ENCODE measurements at regions of chr1 and their contacts with region 1.

Region 1: GRCh38 chr1:21324368-21325141 is 34.3 kb upstream of the ECE1 start:
- DNase-seq: peak; percentile 75 to 77
- ATAC-seq: peak; percentile 78 to 79
- H3K4me3 ChIP-seq: 0 out of 3 replicates have a peak overlapping the region, but pooled peaks have one; percentile 12
- H3K27ac ChIP-seq: peak overlapping the region; percentile 94 to 98
- H3K4me1 ChIP-seq: peaks cover 88% of the 10 kb centered on the region
- CTCF ChIP-seq: no peak
- EP300 ChIP-seq: no peak; a peak in 2 of 5 replicates
- POLR2A ChIP-seq: no peak
- RAD21 ChIP-seq: peak in 1 of 2 experiments; percentile 22; a peak in 1 of 5 replicates

Region 2: DNA sequence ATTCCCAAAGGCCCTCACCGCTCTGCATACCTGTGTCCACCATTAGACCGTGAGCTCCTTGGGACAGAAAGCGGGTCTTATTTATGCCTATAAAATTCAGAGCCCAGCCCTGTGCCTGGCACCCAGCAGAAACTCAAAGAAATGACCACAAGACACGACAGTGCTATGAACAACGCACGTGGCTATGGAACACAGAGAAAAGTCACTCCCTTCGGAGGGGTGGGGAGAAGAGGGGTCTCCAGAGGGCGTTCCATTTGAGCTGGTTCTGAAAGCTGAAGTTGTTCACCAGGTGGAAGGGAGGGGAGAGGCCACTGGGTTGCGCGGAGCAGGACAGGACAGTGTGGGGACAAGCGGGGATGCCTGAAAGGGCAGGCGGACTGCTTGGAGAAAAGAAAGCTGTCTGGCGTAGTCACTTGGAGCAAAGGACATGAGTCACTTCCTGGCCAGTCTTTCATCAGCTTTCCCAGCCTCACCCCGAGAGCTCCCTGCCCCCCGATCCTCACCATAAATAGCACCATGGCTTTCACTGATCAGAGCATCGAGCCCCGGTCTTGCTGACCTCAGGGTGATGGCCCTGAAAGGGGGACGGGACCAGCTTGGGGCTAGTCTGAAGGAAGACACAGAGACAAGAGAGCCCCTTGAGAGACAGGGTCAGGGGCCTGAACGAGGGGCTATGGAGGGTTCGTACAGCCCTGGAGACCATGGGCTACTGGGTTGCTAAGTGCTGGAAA is 62.8 kb before region 1 on chr1:
- CTCF ChIA-PET with region 1: interaction called, 7 read pairs
- POLR2A ChIA-PET with region 1: interaction called, 11 read pairs
- DNase-seq: peak; percentile 81 to 94
- ATAC-seq: peak; percentile 72 to 79
- H3K4me3 ChIP-seq: no peak overlapping the region
- H3K27ac ChIP-seq: peak overlapping the region; percentile 95
- H3K4me1 ChIP-seq: peaks cover 69% of the 10 kb centered on the region
- CTCF ChIP-seq: no peak
- EP300 ChIP-seq: peak; percentile 61 to 78; a peak in 3 of 5 replicates
- POLR2A ChIP-seq: no peak
- RAD21 ChIP-seq: no peak; a peak in 2 of 5 replicates

Region 3: GRCh38 chr1:21313203-21313885 is 11.2 kb before region 1 on chr1:
- CTCF ChIA-PET with region 1: interaction called, 15 read pairs
- POLR2A ChIA-PET with region 1: no interaction called
- DNase-seq: no peak
- ATAC-seq: no peak
- H3K4me3 ChIP-seq: no peak overlapping the region
- H3K27ac ChIP-seq: peak overlapping the region in 1 of 2 experiments; percentile 29; a peak in 2 of 6 replicates
- H3K4me1 ChIP-seq: peaks cover 51% of the 10 kb centered on the region
- CTCF ChIP-seq: no peak
- EP300 ChIP-seq: no peak
- POLR2A ChIP-seq: no peak
- RAD21 ChIP-seq: no peak

Region 4: GRCh38 chr1:21355956-21356355 is 31.4 kb after region 1 on chr1:
- CTCF ChIA-PET with region 1: no interaction called
- POLR2A ChIA-PET with region 1: no interaction called
- DNase-seq: no peak
- ATAC-seq: peak in 1 of 2 experiments; percentile 71; a peak in 2 of 6 replicates
- H3K4me3 ChIP-seq: no peak overlapping the region
- H3K27ac ChIP-seq: no peak overlapping the region
- H3K4me1 ChIP-seq: no peaks in the 10 kb centered on the region
- CTCF ChIP-seq: no peak
- EP300 ChIP-seq: no peak
- POLR2A ChIP-seq: no peak
- RAD21 ChIP-seq: no peak

Region 5: DNA sequence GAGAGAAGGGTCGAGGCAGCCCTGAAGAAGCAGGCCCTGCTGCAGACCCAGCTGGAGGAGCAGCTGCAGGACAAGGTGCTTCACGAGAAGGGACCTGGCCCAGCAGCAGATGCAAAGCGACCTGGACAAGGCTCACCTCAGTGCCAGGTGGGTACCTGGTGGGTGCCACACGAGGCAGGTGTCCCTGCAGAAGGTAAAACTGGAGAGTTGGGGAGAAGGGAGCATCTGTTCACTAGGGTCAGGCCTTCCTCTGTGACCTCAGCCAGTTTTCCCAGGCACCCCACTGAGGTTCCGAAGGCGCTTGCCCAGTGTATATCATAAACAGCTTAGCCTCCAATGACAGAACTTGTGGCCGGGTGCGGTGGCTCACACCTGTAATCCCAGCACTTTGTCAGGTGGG is 109.8 kb after region 1 on chr1:
- CTCF ChIA-PET with region 1: no interaction called
- POLR2A ChIA-PET with region 1: no interaction called
- DNase-seq: no peak
- ATAC-seq: no peak
- H3K4me3 ChIP-seq: no peak overlapping the region
- H3K27ac ChIP-seq: no peak overlapping the region
- H3K4me1 ChIP-seq: peaks cover 3% of the 10 kb centered on the region; the same call in 1 of the 3 replicates
- CTCF ChIP-seq: no peak
- EP300 ChIP-seq: no peak
- POLR2A ChIP-seq: no peak
- RAD21 ChIP-seq: no peak

Region 6: GRCh38 chr1:21552715-21553114 is 228.2 kb after region 1 on chr1:
- CTCF ChIA-PET with region 1: no interaction called
- POLR2A ChIA-PET with region 1: no interaction called
- DNase-seq: no peak
- ATAC-seq: no peak
- H3K4me3 ChIP-seq: no peak overlapping the region
- H3K27ac ChIP-seq: no peak overlapping the region
- H3K4me1 ChIP-seq: peaks cover 4% of the 10 kb centered on the region; the same call in 1 of the 3 replicates
- CTCF ChIP-seq: no peak
- EP300 ChIP-seq: no peak
- POLR2A ChIP-seq: no peak
- RAD21 ChIP-seq: no peak

Region 7: DNA sequence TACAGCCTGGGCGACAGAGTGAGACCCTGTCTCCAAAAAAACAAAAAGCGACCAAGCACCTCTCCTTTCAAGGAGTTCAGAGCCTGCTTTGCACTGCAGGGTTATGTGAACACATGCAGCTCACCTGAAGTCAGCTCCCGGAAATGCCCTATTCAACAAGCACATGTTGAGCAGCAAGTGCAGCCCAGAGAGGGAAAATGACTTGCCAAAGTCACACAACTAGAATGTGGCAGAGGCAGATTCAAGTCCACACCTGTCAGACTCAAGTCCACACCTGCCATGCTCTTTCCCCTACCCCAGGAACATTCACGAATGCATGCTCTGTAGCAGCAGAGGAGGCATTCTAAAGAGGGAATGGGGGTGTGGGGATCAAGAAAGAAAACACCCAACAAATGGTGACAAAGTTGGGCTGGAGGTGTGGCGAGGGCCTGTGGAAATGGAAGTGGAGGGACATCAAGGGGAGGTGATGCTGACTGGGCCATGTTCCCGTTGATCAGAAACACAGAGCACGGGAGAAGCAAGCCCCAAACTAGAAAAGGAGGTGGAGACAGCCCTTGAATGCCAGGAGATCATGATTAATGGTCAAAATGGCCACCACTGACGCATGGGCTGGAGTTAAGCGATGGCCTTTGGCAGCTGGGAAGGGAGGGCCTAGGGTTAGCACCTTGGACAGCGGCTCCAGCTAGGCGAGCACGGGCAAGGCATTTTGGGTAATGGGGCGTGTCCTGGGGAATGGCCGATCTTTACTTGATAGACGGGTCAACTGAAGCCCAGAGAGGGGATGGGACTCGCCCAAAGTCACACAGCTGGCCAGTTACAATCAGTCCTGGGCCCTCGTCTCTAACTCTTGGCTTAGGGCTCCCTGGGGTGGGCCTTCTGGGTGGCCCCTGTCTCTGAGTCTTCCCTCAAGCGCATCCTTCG is 323.1 kb after region 1 on chr1:
- CTCF ChIA-PET with region 1: no interaction called
- POLR2A ChIA-PET with region 1: no interaction called
- DNase-seq: peak in 1 of 2 experiments; percentile 55
- ATAC-seq: peak in 1 of 2 experiments; percentile 78; a peak in 3 of 6 replicates
- H3K4me3 ChIP-seq: no peak overlapping the region
- H3K27ac ChIP-seq: no peak overlapping the region
- H3K4me1 ChIP-seq: peaks cover 20% of the 10 kb centered on the region
- CTCF ChIP-seq: no peak
- EP300 ChIP-seq: no peak
- POLR2A ChIP-seq: no peak
- RAD21 ChIP-seq: no peak